GM10248 (cell line): ENCODE measurements at regions of chr12 and their contacts with region 1.

Region 1: DNA sequence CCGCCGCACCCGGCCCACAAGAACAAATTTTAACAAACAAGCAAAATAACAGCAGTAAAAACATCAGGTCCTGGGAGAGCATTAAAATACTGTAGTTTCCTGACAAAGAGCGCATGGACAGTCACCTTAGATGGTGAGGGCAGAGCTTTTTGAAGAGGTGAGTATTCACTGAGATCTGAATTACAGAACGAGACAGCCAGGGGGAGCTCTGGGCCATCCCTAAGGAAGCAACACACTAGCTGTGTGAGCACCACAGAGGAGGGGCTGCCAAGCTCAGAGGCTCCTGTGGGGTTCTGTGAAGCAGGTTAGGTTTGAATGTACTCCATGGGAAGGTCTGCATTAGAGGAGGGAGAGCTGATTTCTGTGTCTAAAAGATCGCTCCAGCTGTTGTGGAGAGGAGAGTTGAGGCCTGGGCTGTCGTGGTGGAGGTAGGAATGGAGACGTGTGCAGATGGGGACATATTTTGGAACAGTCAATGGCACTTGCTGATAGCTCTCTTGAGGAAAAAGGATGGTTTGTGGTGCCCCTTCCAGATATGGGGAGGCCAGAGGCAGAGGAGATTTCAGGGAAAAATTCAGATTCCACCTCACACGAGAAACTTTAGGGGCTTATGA is 72.9 kb downstream of the TRAFD1 start:
- DNase-seq: peak; percentile 78
- CTCF ChIP-seq: peak; percentile 67

Region 2: GRCh38 chr12:112185093-112185923 is 12.9 kb before region 1 on chr12:
- CTCF ChIA-PET with region 1: interaction called, 13 read pairs
- POLR2A ChIA-PET with region 1: no interaction called
- DNase-seq: no peak
- CTCF ChIP-seq: no peak

Region 3: DNA sequence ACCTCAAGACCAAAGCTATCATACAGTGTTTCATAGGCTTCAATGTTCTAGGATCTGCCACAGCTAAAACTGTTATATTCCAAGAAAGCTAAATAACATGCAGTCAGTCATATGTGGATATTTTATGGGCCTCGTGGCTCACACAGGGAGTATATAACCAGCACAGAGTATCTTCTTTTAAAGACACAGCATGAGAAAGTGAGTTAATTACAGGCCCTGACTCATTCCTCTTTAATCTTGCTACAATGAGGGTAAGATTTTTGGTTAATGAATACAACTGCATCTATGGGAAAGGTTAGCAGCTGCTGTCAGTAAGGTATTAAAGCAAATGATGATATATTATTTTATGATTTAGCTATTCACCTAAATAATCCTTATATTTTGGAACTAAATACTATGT is 38.2 kb after region 1 on chr12:
- CTCF ChIA-PET with region 1: interaction called, 12 read pairs
- POLR2A ChIA-PET with region 1: no interaction called
- DNase-seq: no peak
- CTCF ChIP-seq: no peak

Region 4: GRCh38 chr12:112393328-112393727 is 195.1 kb after region 1 on chr12:
- CTCF ChIA-PET with region 1: interaction called, 82 read pairs
- POLR2A ChIA-PET with region 1: no interaction called
- DNase-seq: no peak
- CTCF ChIP-seq: no peak

Region 5: GRCh38 chr12:112409064-112409905 is 211.1 kb after region 1 on chr12 and contains the start of gene RPL6:
- CTCF ChIA-PET with region 1: interaction called, 14 read pairs
- POLR2A ChIA-PET with region 1: no interaction called
- DNase-seq: peak; percentile 87
- CTCF ChIP-seq: no peak